ENCODE measurements at regions of chr15 and their contacts with region 1.

Region 1: GRCh38 chr15:60478566-60479360 is at the start of gene ICE2:
- DNase-seq: peak; percentile 98
- H3K4me3 ChIP-seq: peak within 1 kb of the TSS; percentile 56 to 83 (median 72)
- H3K27ac ChIP-seq: peak within 1 kb of the TSS; percentile 90 to 95 (median 90)
- H3K4me1 ChIP-seq: peaks cover 0 to 32% (median 26%) of the 10 kb centered on the region in 4 donors
- H3K27me3 ChIP-seq: no peaks in the 10 kb centered on the region
- CTCF ChIP-seq: no peak
- EP300 ChIP-seq: no peak
- POLR2A ChIP-seq: peak; percentile 85 to 92
- total RNA-seq, gene ICE2: 30.0 to 40.3 (median 34.7) TPM

Region 2: DNA sequence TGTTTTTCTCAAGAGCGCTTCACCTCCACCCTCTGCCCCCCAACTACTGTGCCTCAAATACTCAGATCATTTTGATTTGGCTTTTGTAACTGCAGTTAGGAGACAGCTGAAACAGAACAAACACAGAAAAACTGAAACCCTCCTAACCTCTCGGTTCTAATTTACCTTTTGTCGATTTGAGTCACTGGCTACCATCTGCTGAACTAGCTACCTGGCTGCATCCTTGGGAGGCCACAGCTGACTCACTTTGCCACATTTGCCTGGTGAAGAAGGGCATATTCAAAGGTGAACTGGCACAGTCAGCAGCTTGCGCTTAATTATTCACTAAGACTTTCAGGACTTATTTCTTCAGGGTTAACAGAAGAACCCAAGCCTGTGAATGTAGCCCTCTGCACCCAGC is 356.9 kb before region 1 on chr15:
- intact Hi-C with region 1: no loop called
- DNase-seq: no peak
- H3K4me3 ChIP-seq: no peak overlapping the region
- H3K27ac ChIP-seq: no peak overlapping the region
- H3K4me1 ChIP-seq: no peaks in the 10 kb centered on the region
- H3K27me3 ChIP-seq: peaks cover 3 to 34% (median 7%) of the 10 kb centered on the region in 3 donors
- CTCF ChIP-seq: no peak
- EP300 ChIP-seq: no peak
- POLR2A ChIP-seq: no peak

Region 3: DNA sequence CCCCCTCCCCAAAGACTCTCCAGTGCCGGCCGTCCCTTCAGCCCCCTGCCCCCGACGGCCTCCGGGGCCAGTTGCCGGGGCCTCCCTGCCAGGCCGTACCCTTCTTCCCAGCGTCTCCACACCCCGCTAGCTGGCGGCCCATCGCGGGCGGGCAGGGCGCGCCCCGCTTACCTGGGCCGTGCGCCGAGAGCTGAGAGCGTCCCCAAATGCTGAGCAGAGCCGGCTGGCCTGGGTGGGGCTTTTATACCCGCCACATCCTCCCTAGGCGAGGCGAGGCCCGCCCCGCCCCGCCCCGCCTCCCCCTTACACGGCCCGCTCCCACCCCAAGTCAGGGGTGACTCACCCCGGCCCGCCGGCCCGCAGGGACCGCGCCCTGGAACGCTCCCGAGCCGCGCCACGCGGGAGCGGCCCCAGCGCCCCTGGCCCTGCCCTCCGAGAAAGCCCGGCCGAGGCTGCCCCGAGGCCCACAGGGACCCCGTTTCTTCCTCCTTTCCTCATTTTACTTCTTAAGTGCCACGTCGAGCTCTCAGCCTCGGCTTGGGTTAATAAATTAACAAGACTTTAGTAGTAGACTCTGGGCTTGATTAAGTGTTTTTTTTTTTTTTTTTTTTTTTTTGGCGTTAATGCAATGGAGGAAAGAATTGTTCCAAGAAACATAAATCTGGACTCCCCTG is 80.9 kb before region 1 on chr15 and contains the start of gene ANXA2:
- intact Hi-C with region 1: loop called (anchors 2 kb)
- DNase-seq: peak; percentile 95
- H3K4me3 ChIP-seq: peak within 1 kb of the TSS; percentile 78 to 99 (median 96)
- H3K27ac ChIP-seq: peak within 1 kb of the TSS; percentile 95 to 99 (median 98)
- H3K4me1 ChIP-seq: peaks cover 3 to 46% (median 38%) of the 10 kb centered on the region in 4 donors
- H3K27me3 ChIP-seq: no peaks in the 10 kb centered on the region
- CTCF ChIP-seq: no peak
- EP300 ChIP-seq: no peak
- POLR2A ChIP-seq: peak; percentile 50 to 81
- total RNA-seq, gene ANXA2: 157 to 366 (median 214) TPM

Measured in sigmoid colon (tissue), 7 donors.